ENCODE measurements at regions of chr4 and their contacts with region 1.

Region 1: DNA sequence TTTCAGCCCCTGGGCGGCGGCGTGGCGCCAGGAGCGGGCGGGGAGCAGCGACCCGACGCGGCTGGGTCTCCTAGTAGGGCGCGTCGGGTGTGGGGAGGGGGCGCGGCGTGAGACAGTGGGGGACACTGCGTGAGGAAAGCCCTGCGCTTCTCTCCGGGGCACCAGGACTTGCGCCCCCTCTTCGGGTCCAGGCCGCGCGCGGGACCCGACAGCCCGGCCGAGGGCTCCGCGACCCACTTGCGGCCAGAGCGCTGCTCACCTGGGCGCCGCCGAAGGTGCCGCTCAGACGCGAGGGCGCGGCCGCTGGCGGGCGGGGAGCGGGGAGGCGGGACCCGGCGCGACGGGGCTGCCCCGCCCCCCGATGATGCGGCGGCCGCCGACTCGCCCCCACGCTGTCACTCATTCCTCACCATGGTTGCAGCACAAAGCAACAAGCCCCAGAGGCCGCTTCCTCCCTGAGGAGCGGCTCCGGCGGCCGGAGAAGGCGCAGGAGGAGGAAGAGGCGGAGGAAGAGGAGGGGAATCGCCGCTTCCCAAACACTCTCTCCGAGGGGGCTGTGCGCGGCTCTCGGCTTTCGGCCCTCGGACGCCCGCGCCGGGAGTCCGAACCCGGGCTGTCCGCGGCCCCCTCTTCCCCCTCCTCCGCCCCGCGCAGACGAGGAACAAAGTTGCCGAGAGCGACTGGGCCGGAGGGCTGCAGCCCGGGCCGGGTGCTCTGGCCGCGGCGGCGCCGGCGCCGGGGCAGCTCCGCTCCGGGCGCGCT is at the start of gene RAPGEF2:
- DNase-seq: peak; percentile 52
- ATAC-seq: peak; percentile 82
- H3K4me3 ChIP-seq: peak within 1 kb of the TSS; percentile 87
- H3K27ac ChIP-seq: peak within 1 kb of the TSS; percentile 76
- H3K4me1 ChIP-seq: peaks cover 14% of the 10 kb centered on the region
- H3K27me3 ChIP-seq: no peaks in the 10 kb centered on the region
- CTCF ChIP-seq: no peak
- EP300 ChIP-seq: 0 out of 4 replicates have a peak, but pooled peaks of 1 of the 2 experiments have one; percentile 10
- POLR2A ChIP-seq: peak; percentile 85
- RAD21 ChIP-seq: no peak
- polyA plus RNA-seq, gene RAPGEF2: 0.31 to 0.44 TPM

Region 2: DNA sequence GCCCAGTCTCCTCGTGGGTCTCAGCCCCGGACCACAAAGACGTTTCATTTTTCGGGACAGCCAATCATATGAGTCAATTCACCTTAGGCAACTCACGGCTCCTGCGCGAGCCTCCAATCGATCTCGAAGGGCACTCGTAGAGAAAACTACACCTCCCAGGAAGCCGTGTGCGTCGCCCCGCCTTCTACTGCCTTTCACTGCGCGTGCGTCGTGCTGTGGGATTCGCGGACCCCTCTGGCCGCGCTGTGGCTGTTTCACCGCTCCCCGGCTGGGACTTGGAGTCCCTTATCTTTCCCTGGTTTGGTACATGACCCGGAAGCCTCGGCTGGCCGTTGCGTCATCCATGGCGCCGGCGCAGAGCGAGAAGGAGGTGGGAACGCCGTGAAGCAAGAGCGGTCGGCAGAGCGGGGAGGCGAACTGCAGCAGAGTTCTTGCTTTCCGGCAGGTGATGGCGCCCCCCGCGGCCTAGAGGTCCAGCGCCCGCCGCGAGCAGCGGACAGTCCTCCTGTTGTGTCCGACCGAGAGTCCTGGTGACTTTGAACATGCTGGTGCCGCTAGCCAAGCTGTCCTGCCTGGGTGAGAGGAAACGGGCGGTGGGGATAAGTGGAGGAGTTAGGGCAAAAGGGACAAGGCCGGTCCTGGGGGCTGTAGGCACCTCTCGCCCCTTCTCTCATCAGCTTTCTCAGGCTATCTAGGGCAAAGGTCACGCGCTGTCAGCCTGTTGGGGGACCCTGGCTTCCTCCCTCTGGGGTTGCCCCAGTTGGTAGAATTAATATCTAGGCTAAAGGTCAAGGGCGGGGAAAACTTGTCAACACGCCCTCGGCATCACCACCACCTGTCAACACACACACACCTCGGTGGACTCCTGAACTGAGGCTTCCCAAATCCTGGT is 430.6 kb before region 1 on chr4 and contains the start of gene ETFDH:
- CTCF ChIA-PET with region 1: no interaction called
- POLR2A ChIA-PET with region 1: no interaction called
- RAD21 ChIA-PET with region 1: no interaction called
- SMC1A ChIA-PET with region 1: no interaction called
- in situ Hi-C with region 1: no loop called
- intact Hi-C with region 1: loop called (anchors 2 kb)
- DNase-seq: peak; percentile 99
- ATAC-seq: peak; percentile 88
- H3K4me3 ChIP-seq: peak within 1 kb of the TSS; percentile 89
- H3K27ac ChIP-seq: peak within 1 kb of the TSS; percentile 85
- H3K4me1 ChIP-seq: no peaks in the 10 kb centered on the region
- H3K27me3 ChIP-seq: no peaks in the 10 kb centered on the region
- CTCF ChIP-seq: peak; percentile 63 to 82 (median 71)
- EP300 ChIP-seq: no peak
- POLR2A ChIP-seq: peak; percentile 89
- RAD21 ChIP-seq: no peak
- polyA plus RNA-seq, gene ETFDH: 10.9 to 17.9 TPM

Region 3: DNA sequence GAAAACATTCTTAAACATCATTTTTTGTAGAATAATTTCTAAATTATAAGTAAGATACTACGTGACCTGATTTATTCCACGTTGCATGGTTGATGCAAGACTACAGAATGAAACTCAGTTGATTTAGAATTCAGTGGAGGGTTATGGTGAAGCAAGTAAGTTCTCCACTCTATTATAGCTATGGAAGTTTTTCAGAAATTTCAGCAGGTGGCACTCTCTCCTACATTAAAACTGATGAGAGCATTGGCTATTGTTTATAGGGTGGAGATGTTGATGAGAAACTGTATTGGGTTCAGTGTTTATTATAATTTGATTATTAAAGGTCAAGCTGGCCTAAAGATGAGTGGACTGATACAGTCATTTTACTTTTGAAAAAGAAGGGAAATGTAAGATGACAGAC is 246.0 kb before region 1 on chr4:
- CTCF ChIA-PET with region 1: interaction called, 5 read pairs
- POLR2A ChIA-PET with region 1: no interaction called
- RAD21 ChIA-PET with region 1: interaction called, 4 read pairs
- SMC1A ChIA-PET with region 1: interaction called, 8 read pairs
- in situ Hi-C with region 1: no loop called
- intact Hi-C with region 1: loop called (anchors 2 kb)
- DNase-seq: no peak
- ATAC-seq: peak; percentile 78
- H3K4me3 ChIP-seq: no peak overlapping the region
- H3K27ac ChIP-seq: no peak overlapping the region
- H3K4me1 ChIP-seq: peaks cover 8% of the 10 kb centered on the region
- H3K27me3 ChIP-seq: no peaks in the 10 kb centered on the region
- CTCF ChIP-seq: peak; percentile 51 to 71 (median 52); a peak in 5 of 6 replicates
- EP300 ChIP-seq: no peak
- POLR2A ChIP-seq: no peak
- RAD21 ChIP-seq: peak; percentile 93

Region 4: DNA sequence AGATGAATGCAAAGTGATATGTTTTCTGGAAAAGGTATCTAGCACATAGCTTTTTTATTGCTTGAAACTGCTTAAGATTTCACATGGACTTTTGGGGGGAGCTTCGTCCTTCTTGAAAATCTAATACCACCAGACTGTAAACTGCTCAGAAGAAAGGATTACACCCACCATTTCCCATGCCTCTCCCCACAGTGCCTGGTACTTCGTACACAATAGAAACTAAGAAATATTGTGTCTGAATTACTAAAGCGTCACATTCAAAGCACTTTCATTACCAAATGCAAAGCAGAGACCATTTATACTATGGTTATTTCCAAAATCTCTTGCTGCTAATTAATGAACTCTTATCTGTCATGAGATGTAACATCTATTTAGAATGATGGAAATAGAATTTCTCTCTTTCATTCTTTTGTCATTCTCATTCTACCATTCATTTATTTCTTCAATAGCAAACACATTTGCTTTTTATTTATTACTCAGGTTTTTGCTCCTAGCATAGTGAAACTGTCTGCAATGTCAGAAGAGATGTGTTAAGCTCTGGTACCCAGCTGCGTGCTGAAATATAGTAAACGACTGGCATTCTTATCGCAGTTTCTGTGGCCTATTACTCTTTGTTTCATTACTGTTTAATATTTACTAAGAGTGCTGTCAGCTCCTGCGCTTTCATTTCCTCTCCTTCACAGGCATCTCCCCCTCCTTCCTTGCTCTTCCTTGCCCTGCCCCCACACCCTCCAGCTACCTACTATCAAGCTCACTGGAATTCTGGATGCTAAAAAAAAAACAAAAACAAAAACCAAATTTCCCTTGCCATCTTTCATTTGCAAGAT is 51.3 kb before region 1 on chr4:
- CTCF ChIA-PET with region 1: interaction called, 3 read pairs
- POLR2A ChIA-PET with region 1: interaction called, 3 read pairs
- RAD21 ChIA-PET with region 1: interaction called, 13 read pairs
- SMC1A ChIA-PET with region 1: interaction called, 8 read pairs
- in situ Hi-C with region 1: no loop called
- intact Hi-C with region 1: loop called (anchors 1 kb)
- DNase-seq: peak; percentile 84
- ATAC-seq: peak; percentile 92
- H3K4me3 ChIP-seq: peak overlapping the region; percentile 58; the same call in 1 of the 2 replicates
- H3K27ac ChIP-seq: peak overlapping the region; percentile 68
- H3K4me1 ChIP-seq: peaks cover 27% of the 10 kb centered on the region
- H3K27me3 ChIP-seq: no peaks in the 10 kb centered on the region
- CTCF ChIP-seq: no peak
- EP300 ChIP-seq: peak; percentile 70 to 75; a peak in 2 of 4 replicates
- POLR2A ChIP-seq: no peak
- RAD21 ChIP-seq: no peak

Region 5: DNA sequence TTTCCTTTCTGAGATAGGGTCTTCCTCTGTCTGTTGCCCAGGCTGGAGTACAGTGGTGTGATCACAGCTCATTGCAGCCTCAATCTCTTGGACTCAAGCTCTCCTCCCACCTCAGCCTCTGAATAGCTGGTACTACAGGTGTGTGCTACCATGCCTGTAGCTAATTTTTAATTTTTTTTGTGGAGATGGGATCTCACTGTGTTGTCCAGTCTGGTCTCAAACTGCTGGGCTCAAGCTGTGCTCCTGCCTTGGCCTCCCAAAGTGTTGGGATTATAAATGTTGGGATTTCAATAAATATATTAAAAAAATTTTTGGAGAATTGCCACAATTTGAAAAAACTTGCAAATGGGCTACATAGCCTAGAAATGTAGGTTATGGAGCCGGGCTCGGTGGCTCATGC is 18.6 kb after region 1 on chr4:
- CTCF ChIA-PET with region 1: no interaction called
- POLR2A ChIA-PET with region 1: no interaction called
- RAD21 ChIA-PET with region 1: interaction called, 11 read pairs
- SMC1A ChIA-PET with region 1: interaction called, 15 read pairs
- in situ Hi-C with region 1: no loop called
- intact Hi-C with region 1: no loop called
- DNase-seq: no peak
- ATAC-seq: no peak
- H3K4me3 ChIP-seq: no peak overlapping the region
- H3K27ac ChIP-seq: no peak overlapping the region
- H3K4me1 ChIP-seq: peaks cover 10% of the 10 kb centered on the region
- H3K27me3 ChIP-seq: no peaks in the 10 kb centered on the region
- CTCF ChIP-seq: no peak
- EP300 ChIP-seq: no peak
- POLR2A ChIP-seq: no peak
- RAD21 ChIP-seq: no peak

Region 6: DNA sequence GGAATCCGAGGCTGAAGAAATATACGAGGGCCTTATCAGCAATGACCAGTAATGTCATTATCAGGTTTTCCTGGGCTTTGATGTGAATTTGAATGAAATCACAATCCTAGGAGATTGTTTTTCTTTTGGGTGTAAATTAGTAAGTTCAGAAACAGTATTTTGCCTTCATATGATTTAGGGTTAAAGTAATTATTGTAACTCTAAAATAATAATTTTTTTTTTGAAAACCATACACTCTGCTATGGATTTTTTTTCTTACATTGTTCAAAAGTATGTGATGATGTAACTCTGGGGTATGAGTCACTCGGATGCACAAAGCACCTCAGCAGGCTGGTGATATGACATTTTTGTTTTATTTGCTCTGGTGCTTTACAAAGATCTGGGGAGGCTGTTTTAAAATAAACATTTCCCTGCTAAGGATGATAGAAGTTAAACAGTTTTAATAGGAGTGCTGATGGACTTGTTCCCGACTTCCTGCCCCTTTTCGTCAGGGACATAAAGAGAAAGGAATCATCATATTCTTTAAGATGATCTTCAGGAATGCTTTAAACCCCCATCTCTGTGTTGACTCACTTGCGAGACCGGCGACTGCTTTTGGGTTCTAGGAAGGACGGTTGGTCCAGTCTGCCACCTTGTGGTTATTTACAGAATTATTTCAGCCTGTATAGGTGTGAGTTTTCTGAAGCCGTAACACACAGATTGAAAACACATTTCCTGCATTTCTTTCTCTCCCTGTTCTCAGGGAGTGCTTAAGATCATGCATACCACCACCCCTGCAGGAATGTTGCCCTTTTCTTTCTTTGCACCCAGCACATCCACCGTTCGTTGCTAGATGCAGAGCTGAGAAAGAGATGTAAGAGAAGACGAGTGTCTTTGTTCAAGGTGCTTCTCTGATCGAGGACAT is 72.5 kb after region 1 on chr4:
- CTCF ChIA-PET with region 1: interaction called, 5 read pairs
- POLR2A ChIA-PET with region 1: no interaction called
- RAD21 ChIA-PET with region 1: interaction called, 3 read pairs
- SMC1A ChIA-PET with region 1: interaction called, 14 read pairs
- in situ Hi-C with region 1: no loop called
- intact Hi-C with region 1: loop called (anchors 2 kb)
- DNase-seq: peak; percentile 73
- ATAC-seq: peak; percentile 82
- H3K4me3 ChIP-seq: peak overlapping the region; percentile 60
- H3K27ac ChIP-seq: no peak overlapping the region; the same call in 1 of the 2 replicates
- H3K4me1 ChIP-seq: peaks cover 58% of the 10 kb centered on the region
- H3K27me3 ChIP-seq: no peaks in the 10 kb centered on the region
- CTCF ChIP-seq: peak; percentile 59 to 85 (median 75)
- EP300 ChIP-seq: no peak
- POLR2A ChIP-seq: no peak
- RAD21 ChIP-seq: peak; percentile 98

Measured in GM12878 (cell line).